H1 (cell line): ENCODE measurements at regions of chr11 and their contacts with region 1.

Region 1: DNA sequence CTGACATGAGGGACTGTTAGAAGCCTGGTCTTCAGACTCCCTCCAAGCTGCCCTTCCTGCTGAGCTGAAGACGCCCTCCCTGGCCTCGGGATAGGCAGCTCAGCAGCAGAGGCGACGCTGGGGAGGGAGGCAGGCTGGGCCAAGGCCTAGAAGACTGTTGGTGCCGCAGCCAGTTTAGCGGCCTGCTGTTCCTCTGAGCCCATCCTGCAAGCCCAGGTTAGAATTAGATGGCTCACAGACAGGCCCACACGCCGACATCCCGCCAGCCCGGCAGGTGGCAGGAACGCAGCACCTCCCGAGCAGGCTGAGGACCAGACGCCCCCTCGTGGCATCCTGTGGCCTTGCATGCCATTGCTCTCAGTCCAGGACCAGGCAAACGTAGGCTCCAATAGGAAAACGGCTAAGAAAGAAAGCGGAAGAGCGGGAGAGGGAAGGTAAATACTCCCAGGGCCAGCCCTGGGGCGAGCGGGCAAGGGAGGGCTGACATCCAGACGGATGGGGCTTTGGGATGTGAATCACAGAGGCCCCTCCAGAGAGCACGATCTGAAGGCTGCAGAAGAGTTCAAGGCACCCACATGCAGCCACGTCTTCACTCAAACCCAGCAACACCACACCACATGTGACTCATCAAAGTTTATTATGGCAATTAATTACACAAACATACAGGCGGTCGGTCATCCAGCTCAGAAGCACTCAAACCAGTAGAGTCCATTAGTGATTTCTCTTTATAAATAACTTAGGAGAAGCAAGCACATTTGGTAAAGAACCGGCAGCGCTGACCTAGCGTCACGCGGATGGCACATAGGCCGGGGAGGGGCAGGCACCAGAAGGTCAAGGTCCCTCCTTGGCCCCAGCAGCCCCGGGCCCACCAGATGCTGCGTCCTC is 27.6 kb downstream of the CD5 start:
- DNase-seq: peak; percentile 91 to 98
- H3K4me3 ChIP-seq: no peak overlapping the region
- H3K27ac ChIP-seq: no peak overlapping the region
- H3K4me1 ChIP-seq: peaks cover 0 to 8% (median 5%) of the 10 kb centered on the region in 4 experiments; a peak in 4 of 7 replicates
- H3K27me3 ChIP-seq: no peaks in the 10 kb centered on the region
- CTCF ChIP-seq: peak; percentile 100
- EP300 ChIP-seq: no peak
- POLR2A ChIP-seq: no peak
- RAD21 ChIP-seq: peak; percentile 98

Region 2: GRCh38 chr11:61028272-61028761 is 101.6 kb before region 1 on chr11:
- CTCF ChIA-PET with region 1: no interaction called
- POLR2A ChIA-PET with region 1: no interaction called
- DNase-seq: no peak
- H3K4me3 ChIP-seq: no peak overlapping the region
- H3K27ac ChIP-seq: no peak overlapping the region
- H3K4me1 ChIP-seq: peaks cover 0 to 8% (median 4%) of the 10 kb centered on the region in 4 experiments; a peak in 3 of 7 replicates
- H3K27me3 ChIP-seq: peaks cover 0 to 6% (median under 1%) of the 10 kb centered on the region in 4 experiments; a peak in 4 of 7 replicates
- CTCF ChIP-seq: no peak
- EP300 ChIP-seq: no peak
- POLR2A ChIP-seq: no peak
- RAD21 ChIP-seq: no peak

Region 3: GRCh38 chr11:61114913-61115312 is 15.0 kb before region 1 on chr11:
- CTCF ChIA-PET with region 1: interaction called, 14 read pairs
- POLR2A ChIA-PET with region 1: interaction called, 4 read pairs
- DNase-seq: no peak
- H3K4me3 ChIP-seq: no peak overlapping the region
- H3K27ac ChIP-seq: no peak overlapping the region
- H3K4me1 ChIP-seq: no peaks in the 10 kb centered on the region
- H3K27me3 ChIP-seq: no peaks in the 10 kb centered on the region; a peak in 1 of 7 replicates
- CTCF ChIP-seq: no peak
- EP300 ChIP-seq: no peak
- POLR2A ChIP-seq: no peak
- RAD21 ChIP-seq: no peak

Region 4: DNA sequence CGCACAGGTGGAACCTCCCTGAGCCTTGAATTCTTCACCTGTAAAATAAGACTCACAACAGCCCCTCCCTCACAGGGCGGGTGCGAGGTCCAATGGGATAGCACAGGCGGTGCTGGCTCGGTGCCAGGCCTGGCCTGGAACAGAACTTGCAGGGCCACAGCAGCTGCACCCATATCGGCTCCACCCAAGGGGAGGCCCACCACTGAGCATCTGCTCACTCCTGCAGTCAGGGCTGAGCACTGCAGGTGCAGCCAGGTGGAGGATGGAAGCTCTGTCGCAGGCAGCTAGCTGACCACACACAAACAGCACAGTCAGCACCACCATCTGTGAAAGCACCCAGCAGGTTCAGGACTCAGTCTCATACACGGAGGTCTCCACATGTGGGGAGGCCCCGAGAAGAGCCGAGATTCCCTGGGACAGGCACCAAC is 11.7 kb after region 1 on chr11:
- CTCF ChIA-PET with region 1: interaction called, 28 read pairs
- POLR2A ChIA-PET with region 1: interaction called, 3 read pairs
- DNase-seq: no peak
- H3K4me3 ChIP-seq: no peak overlapping the region
- H3K27ac ChIP-seq: no peak overlapping the region
- H3K4me1 ChIP-seq: peaks cover 0 to 1% (median 0%) of the 10 kb centered on the region in 4 experiments; a peak in 3 of 7 replicates
- H3K27me3 ChIP-seq: no peaks in the 10 kb centered on the region
- CTCF ChIP-seq: peak in 2 of 3 experiments; percentile 9 to 17; a peak in 2 of 4 replicates
- EP300 ChIP-seq: no peak
- POLR2A ChIP-seq: no peak
- RAD21 ChIP-seq: no peak